Ascending aorta (tissue), 2 donors: ENCODE measurements at regions of chr11 and their contacts with region 1.

Region 1: GRCh38 chr11:1832211-1832919 is 2.4 kb upstream of the SYT8 start:
- DNase-seq: peak in 1 of 2 donors; percentile 74
- H3K4me3 ChIP-seq: peak overlapping the region; percentile 37 to 53
- H3K27ac ChIP-seq: peak overlapping the region; percentile 94 to 96
- H3K4me1 ChIP-seq: peaks cover 44% of the 10 kb centered on the region in 2 donors
- H3K27me3 ChIP-seq: no peaks in the 10 kb centered on the region
- CTCF ChIP-seq: peak; percentile 98 to 100 (median 98)

Region 2: GRCh38 chr11:1652771-1653540 is 179.4 kb before region 1 on chr11:
- intact Hi-C with region 1: loop called (anchors 1 kb)
- DNase-seq: peak in 1 of 2 donors; percentile 83
- H3K4me3 ChIP-seq: no peak overlapping the region
- H3K27ac ChIP-seq: no peak overlapping the region
- H3K4me1 ChIP-seq: no peaks in the 10 kb centered on the region
- H3K27me3 ChIP-seq: no peaks in the 10 kb centered on the region
- CTCF ChIP-seq: peak; percentile 92 to 99 (median 96)

Region 3: GRCh38 chr11:1682225-1682905 is 150.0 kb before region 1 on chr11:
- intact Hi-C with region 1: no loop called
- DNase-seq: no peak
- H3K4me3 ChIP-seq: no peak overlapping the region
- H3K27ac ChIP-seq: no peak overlapping the region
- H3K4me1 ChIP-seq: no peaks in the 10 kb centered on the region
- H3K27me3 ChIP-seq: no peaks in the 10 kb centered on the region
- CTCF ChIP-seq: no peak

Region 4: GRCh38 chr11:1694064-1694845 is 138.1 kb before region 1 on chr11:
- intact Hi-C with region 1: loop called (anchors 1 kb)
- DNase-seq: peak in 1 of 2 donors; percentile 90
- H3K4me3 ChIP-seq: peak overlapping the region; percentile 35 to 41
- H3K27ac ChIP-seq: peak overlapping the region in 1 of 2 donors; percentile 72
- H3K4me1 ChIP-seq: peaks cover 4 to 8% of the 10 kb centered on the region in 2 donors
- H3K27me3 ChIP-seq: no peaks in the 10 kb centered on the region
- CTCF ChIP-seq: peak; percentile 86 to 95 (median 95)

Region 5: GRCh38 chr11:1882519-1883238 is 50.3 kb after region 1 on chr11:
- intact Hi-C with region 1: loop called (anchors 5 kb)
- DNase-seq: peak in 1 of 2 donors; percentile 84
- H3K4me3 ChIP-seq: no peak overlapping the region
- H3K27ac ChIP-seq: peak overlapping the region; percentile 87 to 91
- H3K4me1 ChIP-seq: peaks cover 4 to 25% of the 10 kb centered on the region in 2 donors
- H3K27me3 ChIP-seq: no peaks in the 10 kb centered on the region
- CTCF ChIP-seq: peak; percentile 74 to 92 (median 90)